Activated CD4-positive, alpha-beta memory T cell treated with anti-CD3 and anti-CD28 coated beads for 36 hours (primary cell): ENCODE measurements at regions of chr4 and their contacts with region 1.

Region 1: GRCh38 chr4:77600521-77601451 is 4.8 kb upstream of the CXCL13 start:
- DNase-seq: peak; percentile 43
- H3K4me3 Mint-ChIP-seq: no peak overlapping the region
- H3K27ac Mint-ChIP-seq: no peak overlapping the region
- H3K4me1 Mint-ChIP-seq: peaks cover 18% of the 10 kb centered on the region
- H3K27me3 Mint-ChIP-seq: peaks cover 24% of the 10 kb centered on the region

Region 2: DNA sequence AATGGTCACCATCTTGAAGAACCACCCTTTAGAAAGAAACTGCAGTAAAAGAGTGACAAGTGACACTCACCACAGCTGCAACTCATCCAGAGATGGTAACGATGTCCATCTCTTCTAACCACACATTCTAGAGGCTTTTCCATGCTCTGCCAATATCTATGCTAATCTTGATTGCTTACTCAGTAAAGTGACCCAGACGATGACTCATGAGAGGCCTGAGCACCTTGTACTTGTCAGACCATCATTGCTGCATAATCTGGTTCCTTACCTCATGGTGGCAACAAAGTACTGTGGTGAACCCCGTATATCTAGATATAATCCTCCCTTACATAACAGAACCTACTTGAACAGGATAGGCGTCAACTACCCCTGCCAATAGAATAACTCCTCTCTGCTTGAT is 368.1 kb before region 1 on chr4:
- CTCF ChIA-PET with region 1: no interaction called
- POLR2A ChIA-PET with region 1: no interaction called
- intact Hi-C with region 1: no loop called
- DNase-seq: no peak
- H3K4me3 Mint-ChIP-seq: no peak overlapping the region
- H3K27ac Mint-ChIP-seq: no peak overlapping the region
- H3K4me1 Mint-ChIP-seq: no peaks in the 10 kb centered on the region
- H3K27me3 Mint-ChIP-seq: peaks cover 8% of the 10 kb centered on the region

Region 3: GRCh38 chr4:77433418-77433733 is 167.4 kb before region 1 on chr4:
- CTCF ChIA-PET with region 1: interaction called, 32 read pairs
- POLR2A ChIA-PET with region 1: no interaction called
- intact Hi-C with region 1: no loop called
- DNase-seq: peak; percentile 10
- H3K4me3 Mint-ChIP-seq: no peak overlapping the region
- H3K27ac Mint-ChIP-seq: no peak overlapping the region
- H3K4me1 Mint-ChIP-seq: peaks cover 14% of the 10 kb centered on the region
- H3K27me3 Mint-ChIP-seq: no peaks in the 10 kb centered on the region

Region 4: GRCh38 chr4:77473509-77473908 is 127.3 kb before region 1 on chr4:
- CTCF ChIA-PET with region 1: interaction called, 206 read pairs
- POLR2A ChIA-PET with region 1: no interaction called
- intact Hi-C with region 1: no loop called
- DNase-seq: no peak
- H3K4me3 Mint-ChIP-seq: no peak overlapping the region
- H3K27ac Mint-ChIP-seq: no peak overlapping the region
- H3K4me1 Mint-ChIP-seq: no peaks in the 10 kb centered on the region
- H3K27me3 Mint-ChIP-seq: peaks cover 38% of the 10 kb centered on the region

Region 5: GRCh38 chr4:77576351-77576750 is 24.4 kb before region 1 on chr4:
- CTCF ChIA-PET with region 1: interaction called, 15 read pairs
- POLR2A ChIA-PET with region 1: no interaction called
- intact Hi-C with region 1: loop called (anchors 1 kb)
- DNase-seq: no peak
- H3K4me3 Mint-ChIP-seq: no peak overlapping the region
- H3K27ac Mint-ChIP-seq: no peak overlapping the region
- H3K4me1 Mint-ChIP-seq: peaks cover 13% of the 10 kb centered on the region
- H3K27me3 Mint-ChIP-seq: peaks cover 15% of the 10 kb centered on the region

Region 6: DNA sequence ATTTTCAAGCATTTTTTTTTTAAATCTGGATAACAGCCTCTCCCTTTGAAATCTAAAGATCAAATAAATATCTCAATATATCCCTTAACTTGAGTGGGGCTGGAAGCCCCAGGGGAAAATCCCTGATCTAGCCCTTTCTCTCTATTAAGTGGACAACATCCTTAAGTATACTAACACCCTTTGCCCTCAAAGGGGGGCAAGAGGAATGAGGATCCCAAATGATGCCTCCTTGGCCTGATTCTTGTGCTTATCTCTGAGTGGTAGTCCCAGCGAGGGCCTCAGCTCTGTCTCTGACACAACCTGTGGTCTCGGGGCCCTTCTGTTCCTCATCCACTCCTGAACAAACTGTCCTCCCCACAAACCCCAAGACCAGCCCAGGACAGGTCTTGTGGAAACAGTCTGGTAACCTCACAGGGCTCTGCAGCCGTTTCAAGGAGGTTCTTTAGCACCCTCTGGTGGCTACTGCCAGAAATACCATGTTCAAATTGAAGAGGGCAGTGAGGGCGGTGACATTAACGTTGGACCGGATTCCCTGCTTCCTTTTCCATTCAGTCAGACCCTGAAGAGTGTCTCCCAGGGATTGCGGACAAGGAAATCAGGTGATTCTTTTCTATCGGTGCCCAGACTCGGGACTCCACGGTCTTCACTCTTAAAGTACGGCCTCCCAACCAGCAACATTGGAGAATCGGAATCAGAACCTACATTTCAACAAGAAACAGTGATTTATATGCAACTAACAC is 17.8 kb after region 1 on chr4:
- CTCF ChIA-PET with region 1: interaction called, 78 read pairs
- POLR2A ChIA-PET with region 1: no interaction called
- intact Hi-C with region 1: no loop called
- DNase-seq: peak; percentile 71
- H3K4me3 Mint-ChIP-seq: no peak overlapping the region
- H3K27ac Mint-ChIP-seq: no peak overlapping the region
- H3K4me1 Mint-ChIP-seq: peaks cover 5% of the 10 kb centered on the region
- H3K27me3 Mint-ChIP-seq: peaks cover 15% of the 10 kb centered on the region